ENCODE measurements at regions of chr15 and their contacts with region 1.

Region 1: GRCh38 chr15:90902040-90902839 is 862 bp upstream of the MAN2A2 start:
- DNase-seq: peak; percentile 88
- H3K4me3 ChIP-seq: peak overlapping the region; percentile 53 to 79 (median 63)
- H3K27ac ChIP-seq: peak overlapping the region; percentile 51
- H3K4me1 ChIP-seq: peaks cover 17% of the 10 kb centered on the region
- H3K27me3 ChIP-seq: no peaks in the 10 kb centered on the region
- CTCF ChIP-seq: peak; percentile 66 to 77
- POLR2A ChIP-seq: peak; percentile 78

Region 2: GRCh38 chr15:90343302-90343790 is 558.9 kb before region 1 on chr15:
- CTCF ChIA-PET with region 1: no interaction called
- POLR2A ChIA-PET with region 1: interaction called, 10 read pairs
- dilution Hi-C with region 1: no loop called
- intact Hi-C with region 1: no loop called
- DNase-seq: peak; percentile 90
- H3K4me3 ChIP-seq: no peak overlapping the region
- H3K27ac ChIP-seq: peak overlapping the region; percentile 4
- H3K4me1 ChIP-seq: peaks cover 17% of the 10 kb centered on the region
- H3K27me3 ChIP-seq: no peaks in the 10 kb centered on the region
- CTCF ChIP-seq: no peak
- POLR2A ChIP-seq: no peak

Region 3: DNA sequence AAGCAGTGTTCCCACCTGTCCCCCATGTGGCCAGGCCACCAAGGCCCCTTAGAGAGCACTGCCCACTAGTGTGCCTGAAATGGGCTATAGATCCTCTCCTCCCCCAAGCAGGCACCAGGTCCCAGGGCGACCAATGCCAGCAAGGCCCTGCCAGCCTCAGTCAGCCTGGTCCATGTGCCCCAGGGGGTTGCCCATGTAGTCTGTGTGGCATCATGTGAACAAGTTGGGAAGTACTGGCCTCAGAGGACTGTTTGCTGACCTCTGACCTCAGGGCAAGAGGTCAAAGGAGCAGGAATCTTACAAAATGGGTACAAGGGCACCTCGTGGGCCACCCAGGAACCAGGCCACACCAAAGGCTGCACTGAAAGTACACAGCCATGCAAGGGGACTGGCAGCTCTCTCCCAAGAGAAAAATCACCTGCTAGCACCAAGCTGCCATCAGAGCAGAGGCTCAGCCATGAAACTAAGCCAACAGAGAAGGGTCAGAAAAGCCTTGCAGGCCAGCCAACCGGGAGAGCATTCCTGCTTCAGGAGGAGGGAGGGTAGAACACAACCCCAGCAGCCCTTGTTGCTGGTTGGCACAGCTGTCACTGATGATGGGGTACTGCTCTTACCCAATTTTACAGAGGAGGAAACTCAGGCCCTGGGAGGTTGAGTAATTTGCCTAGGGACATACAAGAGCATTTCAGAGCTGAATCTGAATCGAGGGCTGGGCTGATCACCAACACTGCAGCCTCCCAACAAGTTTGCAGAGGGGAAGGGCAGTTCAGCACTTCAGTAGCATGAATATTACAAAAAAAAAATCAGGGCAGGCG is 39.1 kb before region 1 on chr15:
- CTCF ChIA-PET with region 1: no interaction called
- POLR2A ChIA-PET with region 1: no interaction called
- dilution Hi-C with region 1: no loop called
- intact Hi-C with region 1: no loop called
- DNase-seq: no peak
- H3K4me3 ChIP-seq: no peak overlapping the region
- H3K27ac ChIP-seq: no peak overlapping the region
- H3K4me1 ChIP-seq: no peaks in the 10 kb centered on the region
- H3K27me3 ChIP-seq: no peaks in the 10 kb centered on the region
- CTCF ChIP-seq: no peak
- POLR2A ChIP-seq: no peak

Measured in endothelial cell of umbilical vein (primary cell).